ENCODE measurements at regions of chr2 and their contacts with region 1.

Region 1: DNA sequence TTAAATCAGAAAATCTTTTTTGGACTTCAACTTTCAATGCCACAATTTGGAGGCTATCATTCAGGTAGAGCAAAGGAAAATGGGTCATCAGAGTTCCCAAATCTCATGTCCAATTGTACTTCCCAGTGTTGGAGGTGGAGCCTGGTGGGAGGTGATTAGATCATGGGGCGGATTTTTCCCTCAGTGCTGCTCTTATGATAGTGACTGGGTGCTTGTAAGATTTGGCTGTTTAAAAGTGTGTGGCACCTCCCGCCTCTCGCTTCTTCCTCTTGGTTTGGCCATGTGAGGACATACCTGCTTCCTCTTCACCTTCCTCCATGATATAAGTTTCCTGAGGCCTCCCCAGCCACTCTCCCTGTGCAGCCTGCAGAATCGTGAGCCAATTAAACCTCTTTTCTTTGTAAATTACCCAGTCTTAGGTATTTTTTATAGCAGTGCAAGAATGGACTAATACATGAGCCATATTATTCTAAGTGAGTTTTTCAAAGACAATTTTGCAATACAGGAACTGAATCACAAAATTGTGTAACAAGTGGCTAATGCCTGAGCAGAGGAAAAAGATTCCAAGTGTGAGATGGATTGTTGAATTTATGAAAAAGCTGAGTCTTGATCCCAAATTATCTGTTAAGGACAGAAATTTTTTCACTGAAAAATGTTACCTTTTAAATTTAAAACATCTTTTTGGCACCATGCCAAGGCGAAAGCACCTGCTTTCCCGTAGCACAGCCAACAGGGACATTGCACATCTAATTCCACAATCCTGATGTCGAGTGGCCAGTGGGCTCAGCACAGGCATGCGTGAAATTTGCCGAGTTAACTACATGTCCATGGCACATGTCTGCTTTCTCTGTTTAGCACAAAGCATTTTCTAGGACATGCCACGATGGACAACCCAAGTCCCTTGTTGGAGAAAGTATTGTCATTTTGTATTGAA is 150.9 kb downstream of the COL6A3 start:
- DNase-seq: peak; percentile 53
- H3K4me3 ChIP-seq: no peak overlapping the region
- H3K27ac ChIP-seq: no peak overlapping the region
- H3K4me1 ChIP-seq: peaks cover 8% of the 10 kb centered on the region
- H3K27me3 ChIP-seq: no peaks in the 10 kb centered on the region
- CTCF ChIP-seq: no peak

Region 2: GRCh38 chr2:237280229-237280628 is 17.1 kb after region 1 on chr2:
- CTCF ChIA-PET with region 1: no interaction called
- POLR2A ChIA-PET with region 1: interaction called, 17 read pairs
- intact Hi-C with region 1: no loop called
- DNase-seq: peak; percentile 69
- H3K4me3 ChIP-seq: no peak overlapping the region
- H3K27ac ChIP-seq: no peak overlapping the region
- H3K4me1 ChIP-seq: peaks cover 35% of the 10 kb centered on the region
- H3K27me3 ChIP-seq: peaks cover 51% of the 10 kb centered on the region
- CTCF ChIP-seq: no peak

Region 3: GRCh38 chr2:237627441-237628246 is 364.5 kb after region 1 on chr2 and contains the start of gene LRRFIP1:
- CTCF ChIA-PET with region 1: no interaction called
- POLR2A ChIA-PET with region 1: no interaction called
- intact Hi-C with region 1: no loop called
- DNase-seq: peak; percentile 37
- H3K4me3 ChIP-seq: peak within 1 kb of the TSS; percentile 69
- H3K27ac ChIP-seq: peak within 1 kb of the TSS; percentile 49
- H3K4me1 ChIP-seq: no peaks in the 10 kb centered on the region
- H3K27me3 ChIP-seq: no peaks in the 10 kb centered on the region
- CTCF ChIP-seq: no peak
- total RNA-seq, gene LRRFIP1: 69.3 and 71.8 TPM in 2 replicates